Activated CD4-positive, alpha-beta memory T cell treated with anti-CD3 and anti-CD28 coated beads for 36 hours (primary cell): ENCODE measurements at regions of chr5 and their contacts with region 1.

Region 1: GRCh38 chr5:76790632-76791290 is 28.1 kb upstream of the F2RL1 start:
- DNase-seq: peak; percentile 24
- H3K4me3 Mint-ChIP-seq: no peak overlapping the region
- H3K27ac Mint-ChIP-seq: peak overlapping the region; percentile 67
- H3K4me1 Mint-ChIP-seq: peaks cover 20% of the 10 kb centered on the region
- H3K27me3 Mint-ChIP-seq: no peaks in the 10 kb centered on the region

Region 2: GRCh38 chr5:76209297-76209696 is 581.5 kb before region 1 on chr5:
- CTCF ChIA-PET with region 1: no interaction called
- POLR2A ChIA-PET with region 1: no interaction called
- intact Hi-C with region 1: no loop called
- DNase-seq: no peak
- H3K4me3 Mint-ChIP-seq: no peak overlapping the region
- H3K27ac Mint-ChIP-seq: no peak overlapping the region
- H3K4me1 Mint-ChIP-seq: no peaks in the 10 kb centered on the region
- H3K27me3 Mint-ChIP-seq: peaks cover 5% of the 10 kb centered on the region

Region 3: DNA sequence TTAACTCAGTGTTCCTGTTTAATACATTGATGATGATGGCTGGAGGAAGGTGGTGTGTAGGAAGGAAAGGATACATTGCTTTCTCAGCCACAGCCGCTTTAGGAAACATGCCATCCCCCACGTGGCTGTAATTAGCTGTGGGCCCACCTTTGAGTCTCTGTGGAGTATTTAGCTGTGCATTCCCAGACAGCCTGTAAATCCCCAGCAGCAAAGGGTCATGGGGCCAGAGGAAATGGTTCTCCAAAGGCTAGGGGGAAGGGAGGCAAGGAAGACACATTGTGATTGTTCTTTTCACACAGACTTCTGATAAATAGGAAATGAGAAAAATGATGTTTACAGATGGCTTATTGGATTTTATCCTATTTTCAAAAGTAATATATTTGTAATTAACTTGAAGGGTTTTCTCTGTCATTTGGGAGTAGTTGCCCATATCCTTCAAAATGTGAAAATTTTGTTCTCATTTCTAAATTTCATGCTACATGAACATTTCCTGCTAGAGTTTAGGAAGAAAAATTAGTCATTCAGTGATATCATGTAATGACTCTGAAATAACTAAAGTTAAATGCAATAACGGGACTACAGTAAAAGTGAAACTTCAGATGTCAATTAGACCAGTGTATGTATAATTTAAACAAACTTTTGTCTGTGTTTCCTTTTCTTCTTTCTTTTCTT is 99.2 kb before region 1 on chr5:
- CTCF ChIA-PET with region 1: no interaction called
- POLR2A ChIA-PET with region 1: no interaction called
- intact Hi-C with region 1: loop called (anchors 1 kb)
- DNase-seq: no peak
- H3K4me3 Mint-ChIP-seq: no peak overlapping the region
- H3K27ac Mint-ChIP-seq: peak overlapping the region; percentile 62
- H3K4me1 Mint-ChIP-seq: peaks cover 23% of the 10 kb centered on the region
- H3K27me3 Mint-ChIP-seq: no peaks in the 10 kb centered on the region

Region 4: DNA sequence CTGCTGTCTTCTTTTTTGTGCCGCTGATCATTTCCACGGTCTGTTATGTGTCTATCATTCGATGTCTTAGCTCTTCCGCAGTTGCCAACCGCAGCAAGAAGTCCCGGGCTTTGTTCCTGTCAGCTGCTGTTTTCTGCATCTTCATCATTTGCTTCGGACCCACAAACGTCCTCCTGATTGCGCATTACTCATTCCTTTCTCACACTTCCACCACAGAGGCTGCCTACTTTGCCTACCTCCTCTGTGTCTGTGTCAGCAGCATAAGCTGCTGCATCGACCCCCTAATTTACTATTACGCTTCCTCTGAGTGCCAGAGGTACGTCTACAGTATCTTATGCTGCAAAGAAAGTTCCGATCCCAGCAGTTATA is 57.7 kb before region 1 on chr5:
- CTCF ChIA-PET with region 1: no interaction called
- POLR2A ChIA-PET with region 1: interaction called, 3 read pairs
- intact Hi-C with region 1: loop called (anchors 2 kb)
- DNase-seq: peak; percentile 77
- H3K4me3 Mint-ChIP-seq: peak overlapping the region; percentile 46
- H3K27ac Mint-ChIP-seq: peak overlapping the region; percentile 86
- H3K4me1 Mint-ChIP-seq: peaks cover 29% of the 10 kb centered on the region
- H3K27me3 Mint-ChIP-seq: peaks cover 3% of the 10 kb centered on the region

Region 5: GRCh38 chr5:76805850-76806505 is 15.2 kb after region 1 on chr5:
- CTCF ChIA-PET with region 1: no interaction called
- POLR2A ChIA-PET with region 1: interaction called, 7 read pairs
- intact Hi-C with region 1: loop called (anchors 1 kb)
- DNase-seq: peak; percentile 15
- H3K4me3 Mint-ChIP-seq: no peak overlapping the region
- H3K27ac Mint-ChIP-seq: peak overlapping the region; percentile 55
- H3K4me1 Mint-ChIP-seq: peaks cover 3% of the 10 kb centered on the region
- H3K27me3 Mint-ChIP-seq: no peaks in the 10 kb centered on the region

Region 6: DNA sequence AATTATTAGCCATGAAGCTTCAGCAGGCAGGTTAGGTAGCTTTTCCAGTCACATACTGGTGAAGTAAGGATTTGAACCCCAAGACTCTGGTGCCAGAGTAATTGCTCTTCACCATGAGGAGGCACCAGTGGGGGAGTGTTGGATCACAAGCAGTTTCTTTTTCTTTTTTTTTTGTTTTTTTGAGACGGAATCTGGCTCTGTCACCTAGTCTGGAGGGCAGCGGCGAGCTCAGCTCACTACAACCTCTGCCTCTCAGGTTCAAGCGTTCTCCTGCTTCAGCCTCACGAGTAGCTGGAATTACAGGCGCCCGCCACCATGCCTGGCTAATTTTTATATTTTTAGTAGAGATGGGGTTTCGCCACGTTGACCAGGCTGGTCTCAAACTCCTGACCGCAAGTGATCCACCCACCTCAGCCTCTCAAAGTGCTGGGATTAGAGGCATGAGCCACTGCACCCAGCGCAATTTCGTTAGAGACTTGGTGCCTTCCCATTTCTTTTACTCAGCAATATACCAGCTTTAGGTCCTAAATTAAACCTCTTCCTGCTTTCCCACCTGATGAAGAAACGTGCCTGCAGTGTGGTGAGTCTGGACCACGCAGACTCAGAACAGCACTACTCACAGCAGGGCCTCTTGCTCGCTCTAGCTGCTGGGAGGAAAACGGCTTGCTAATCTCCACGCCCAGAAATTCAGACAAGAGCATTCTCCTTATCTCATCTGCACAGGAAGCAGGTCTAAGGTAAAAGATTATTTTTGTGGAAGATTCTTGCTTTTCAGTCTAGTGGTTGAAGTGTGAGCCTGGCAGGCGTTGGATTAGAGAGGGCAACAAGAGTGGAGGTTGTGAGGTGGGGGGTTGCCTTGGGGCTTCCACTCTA is 58.9 kb after region 1 on chr5 and contains the start of gene S100Z:
- CTCF ChIA-PET with region 1: no interaction called
- POLR2A ChIA-PET with region 1: no interaction called
- intact Hi-C with region 1: loop called (anchors 2 kb)
- DNase-seq: peak; percentile 71
- H3K4me3 Mint-ChIP-seq: peak within 1 kb of the TSS; percentile 61
- H3K27ac Mint-ChIP-seq: peak within 1 kb of the TSS; percentile 75
- H3K4me1 Mint-ChIP-seq: peaks cover 31% of the 10 kb centered on the region
- H3K27me3 Mint-ChIP-seq: no peaks in the 10 kb centered on the region
- total RNA-seq, gene S100Z: 1.8 to 2.1 TPM

Region 7: DNA sequence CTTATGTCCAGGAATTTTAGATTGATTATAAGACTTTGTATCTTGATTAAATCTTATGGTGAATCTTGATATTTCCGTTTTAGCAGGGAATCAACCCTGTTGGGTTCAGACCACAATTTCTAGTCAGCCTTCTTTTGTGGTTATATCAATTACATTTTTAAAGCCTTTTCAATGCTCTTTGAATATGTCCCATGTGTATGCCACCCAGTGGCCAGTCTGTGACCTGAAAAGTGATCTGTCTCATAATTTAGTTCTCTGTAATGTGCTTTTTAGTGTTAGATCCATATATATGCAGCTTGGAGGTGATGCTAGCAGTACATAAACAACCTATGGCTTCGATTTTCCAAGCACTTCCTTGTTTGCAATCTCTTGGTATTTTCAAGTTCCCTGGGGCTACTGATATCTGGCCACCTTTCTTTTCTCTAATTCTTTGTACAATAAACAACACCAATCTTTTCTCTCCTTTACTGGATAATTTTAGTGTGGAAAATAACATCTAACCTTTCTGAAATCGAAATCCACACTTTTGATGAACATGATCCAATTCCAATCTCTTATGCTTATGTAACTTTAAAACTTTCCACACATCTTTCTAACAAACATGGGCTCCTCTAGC is 448.5 kb after region 1 on chr5:
- CTCF ChIA-PET with region 1: no interaction called
- POLR2A ChIA-PET with region 1: no interaction called
- intact Hi-C with region 1: no loop called
- DNase-seq: no peak
- H3K4me3 Mint-ChIP-seq: no peak overlapping the region
- H3K27ac Mint-ChIP-seq: no peak overlapping the region
- H3K4me1 Mint-ChIP-seq: no peaks in the 10 kb centered on the region
- H3K27me3 Mint-ChIP-seq: peaks cover 9% of the 10 kb centered on the region

Region 8: GRCh38 chr5:77379558-77380061 is 588.8 kb after region 1 on chr5:
- CTCF ChIA-PET with region 1: no interaction called
- POLR2A ChIA-PET with region 1: no interaction called
- intact Hi-C with region 1: no loop called
- DNase-seq: peak; percentile 81
- H3K4me3 Mint-ChIP-seq: no peak overlapping the region
- H3K27ac Mint-ChIP-seq: peak overlapping the region; percentile 64
- H3K4me1 Mint-ChIP-seq: peaks cover 31% of the 10 kb centered on the region
- H3K27me3 Mint-ChIP-seq: peaks cover 3% of the 10 kb centered on the region